Right cardiac atrium (tissue), 5 donors: ENCODE measurements at regions of chr1 and their contacts with region 1.

Region 1: GRCh38 chr1:209747580-209748262 is 8.1 kb upstream of the TRAF3IP3 start:
- DNase-seq: peak; percentile 91 to 95 (median 95)
- ATAC-seq: peak; percentile 97 to 99
- H3K4me3 ChIP-seq: no peak overlapping the region
- H3K27ac ChIP-seq: peak overlapping the region; percentile 38
- H3K4me1 ChIP-seq: peaks cover 7% of the 10 kb centered on the region
- H3K27me3 ChIP-seq: no peaks in the 10 kb centered on the region

Region 2: DNA sequence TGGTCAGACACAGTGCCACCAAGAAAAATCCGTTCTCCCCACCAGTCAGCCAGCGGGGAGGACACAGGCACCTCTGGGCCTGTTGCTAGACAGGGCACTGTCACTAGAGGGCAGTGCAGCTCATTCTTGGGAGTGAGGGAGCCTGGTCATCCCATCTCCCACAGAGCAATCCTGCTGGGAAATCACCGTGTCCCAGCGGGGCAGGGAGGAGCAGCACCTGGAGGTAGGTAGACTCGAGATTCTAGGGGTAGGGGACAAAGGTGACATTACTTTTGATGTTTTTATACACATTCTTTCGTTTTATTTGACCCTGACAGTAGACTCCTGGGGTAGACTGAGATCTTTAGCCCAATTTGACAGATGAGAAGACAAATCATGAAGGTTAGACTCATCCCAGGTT is 170.9 kb before region 1 on chr1:
- intact Hi-C with region 1: loop called (anchors 2 to 5 kb)
- DNase-seq: peak; percentile 80 to 91 (median 89)
- ATAC-seq: peak; percentile 88 to 95
- H3K4me3 ChIP-seq: no peak overlapping the region
- H3K27ac ChIP-seq: no peak overlapping the region
- H3K4me1 ChIP-seq: no peaks in the 10 kb centered on the region
- H3K27me3 ChIP-seq: no peaks in the 10 kb centered on the region